ENCODE measurements at regions of chrX and their contacts with region 1.

Region 1: DNA sequence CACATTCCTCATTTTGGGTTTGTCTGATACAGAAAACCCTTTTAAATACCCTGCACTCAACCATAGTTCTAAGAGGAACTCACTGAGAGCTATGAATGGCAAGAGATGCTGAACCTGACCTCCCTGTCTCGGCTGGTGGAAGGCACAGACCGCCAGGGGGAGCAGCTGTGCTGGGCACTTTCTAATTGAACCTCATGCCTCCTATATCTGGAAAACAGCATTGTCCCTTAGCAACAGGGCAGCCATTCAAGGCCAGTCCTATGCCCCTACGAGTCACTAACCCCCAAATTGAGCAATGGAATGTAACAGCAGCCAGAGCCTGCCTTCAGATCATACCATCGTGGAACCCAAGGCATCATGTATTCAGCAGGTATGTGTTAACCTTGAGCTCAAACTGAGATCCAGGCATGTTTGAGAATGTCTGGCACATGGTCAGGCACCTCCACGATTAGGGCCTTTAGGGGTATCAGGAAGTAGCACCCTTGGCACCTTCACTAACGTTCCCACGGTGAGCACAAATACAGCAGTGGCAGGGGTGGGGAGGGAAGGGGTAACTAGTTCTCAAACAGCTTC is 5.1 kb downstream of the USP27X start:
- H3K4me3 ChIP-seq: no peak overlapping the region
- H3K27ac ChIP-seq: no peak overlapping the region
- H3K4me1 ChIP-seq: no peaks in the 10 kb centered on the region
- CTCF ChIP-seq: peak; percentile 46; the same call in 1 of the 2 replicates

Region 2: DNA sequence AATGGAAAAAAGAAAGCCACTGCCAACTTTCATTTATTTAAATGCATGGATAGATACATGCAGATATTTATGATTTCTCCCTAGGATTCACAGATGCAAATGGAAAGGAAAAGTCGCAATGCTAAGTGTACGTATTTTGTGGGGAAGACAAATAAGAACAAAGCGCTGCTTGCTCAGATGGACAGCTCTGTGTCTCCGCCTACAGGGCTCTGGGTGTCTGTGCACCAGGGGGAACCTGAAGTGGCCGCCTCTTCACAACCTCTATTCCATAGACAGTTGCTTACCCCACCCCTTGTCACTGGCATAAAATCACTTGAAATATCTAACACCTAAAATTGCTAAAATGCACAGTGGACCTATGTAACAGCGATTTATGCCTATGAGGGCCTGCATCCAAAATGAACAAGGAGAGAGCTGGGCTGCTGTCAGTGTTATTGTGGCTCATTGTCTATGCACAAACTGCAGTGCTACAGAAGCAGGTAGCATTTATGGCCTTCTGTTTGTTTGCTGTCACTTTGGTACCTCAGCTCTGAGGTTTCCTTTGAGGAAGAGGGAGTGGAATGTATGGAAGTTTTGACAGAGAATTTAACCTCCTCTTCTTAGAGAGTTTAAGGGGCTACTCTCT is 130.0 kb before region 1 on chrX:
- CTCF ChIA-PET with region 1: no interaction called
- POLR2A ChIA-PET with region 1: no interaction called
- H3K4me3 ChIP-seq: no peak overlapping the region
- H3K27ac ChIP-seq: no peak overlapping the region
- H3K4me1 ChIP-seq: no peaks in the 10 kb centered on the region
- CTCF ChIP-seq: no peak

Region 3: GRCh38 chrX:49793686-49794085 is 90.7 kb before region 1 on chrX:
- CTCF ChIA-PET with region 1: no interaction called
- POLR2A ChIA-PET with region 1: no interaction called
- H3K4me3 ChIP-seq: no peak overlapping the region
- H3K27ac ChIP-seq: no peak overlapping the region
- H3K4me1 ChIP-seq: no peaks in the 10 kb centered on the region
- CTCF ChIP-seq: no peak

Region 4: DNA sequence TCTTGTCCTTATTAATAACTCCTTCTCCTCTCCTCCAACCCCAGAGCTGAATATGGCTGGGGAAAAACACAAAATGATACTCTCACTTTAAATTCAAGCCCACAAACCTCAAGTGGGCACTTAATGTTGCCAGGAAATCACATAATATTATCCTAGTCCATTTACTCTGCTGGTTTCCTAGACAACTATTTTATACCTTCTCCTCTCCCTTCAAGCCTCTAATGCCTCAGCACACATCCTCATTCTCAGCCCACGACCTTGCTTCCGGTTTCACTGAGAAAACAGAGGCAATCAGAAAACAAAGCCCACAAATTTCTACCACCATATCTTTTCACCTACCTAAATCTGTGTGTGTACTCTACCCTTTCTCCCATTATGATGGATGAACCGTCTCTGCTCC is 26.0 kb after region 1 on chrX:
- CTCF ChIA-PET with region 1: interaction called, 15 read pairs
- POLR2A ChIA-PET with region 1: no interaction called
- H3K4me3 ChIP-seq: no peak overlapping the region
- H3K27ac ChIP-seq: no peak overlapping the region
- H3K4me1 ChIP-seq: no peaks in the 10 kb centered on the region
- CTCF ChIP-seq: no peak

Region 5: DNA sequence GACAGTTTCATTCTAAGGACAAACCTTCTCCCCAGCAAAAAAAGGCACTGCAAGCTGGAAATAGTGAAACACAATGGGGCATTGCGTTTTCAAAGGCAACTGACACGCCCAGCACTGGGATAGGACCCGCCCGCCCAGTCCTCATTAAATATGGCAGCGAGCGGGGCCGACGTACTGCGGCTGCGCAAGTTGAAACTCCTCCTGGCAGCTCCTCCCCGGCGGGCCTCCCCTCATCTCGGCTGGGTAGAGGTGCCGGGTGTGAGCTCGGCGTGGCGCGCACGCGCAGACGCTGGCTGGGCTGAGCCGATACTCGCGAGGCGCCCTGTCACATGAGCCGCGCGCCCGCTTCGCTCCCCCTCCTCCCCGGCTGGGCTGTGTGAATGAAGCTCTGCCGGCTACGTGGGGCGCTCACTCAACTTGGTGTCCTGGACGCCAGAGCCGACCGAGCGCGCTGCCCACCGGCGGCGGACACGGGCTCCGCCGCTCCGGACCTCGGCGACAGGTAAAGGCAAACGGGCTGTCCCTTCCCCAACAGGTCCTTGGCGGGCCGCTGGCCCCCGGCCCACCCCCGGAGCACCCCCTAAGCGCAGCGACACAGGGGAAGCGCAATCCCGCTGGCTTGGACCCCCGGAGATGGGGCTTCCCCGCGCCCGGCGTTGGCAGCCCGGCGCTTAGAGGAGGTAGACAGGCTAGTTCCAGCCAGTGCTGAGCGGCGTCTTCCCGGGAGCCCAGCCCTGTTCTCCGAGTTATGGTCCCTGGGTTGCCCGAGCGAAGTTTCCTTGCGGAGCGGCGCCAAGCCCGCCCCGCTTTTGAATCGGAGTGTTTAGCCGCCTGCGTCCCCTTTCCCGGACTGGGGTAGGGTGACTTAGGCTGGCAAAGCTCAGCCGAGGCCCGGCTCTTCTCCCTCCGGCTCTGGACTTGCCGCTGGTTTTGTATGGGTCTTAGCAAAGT is 38.2 kb after region 1 on chrX and contains the start of gene CLCN5:
- CTCF ChIA-PET with region 1: interaction called, 38 read pairs
- POLR2A ChIA-PET with region 1: no interaction called
- H3K4me3 ChIP-seq: peak within 1 kb of the TSS; percentile 55
- H3K27ac ChIP-seq: peak within 1 kb of the TSS; percentile 63
- H3K4me1 ChIP-seq: peaks cover 7% of the 10 kb centered on the region
- CTCF ChIP-seq: no peak